ENCODE measurements at regions of chr11 and their contacts with region 1.

Region 1: GRCh38 chr11:110429731-110430266 is at the start of gene FDX1:
- DNase-seq: peak; percentile 65 to 73
- H3K4me3 ChIP-seq: peak within 1 kb of the TSS; percentile 89
- H3K27ac ChIP-seq: peak within 1 kb of the TSS; percentile 52
- H3K4me1 ChIP-seq: peaks cover 34% of the 10 kb centered on the region
- H3K27me3 ChIP-seq: no peaks in the 10 kb centered on the region
- CTCF ChIP-seq: no peak
- total RNA-seq, gene FDX1: 10.5 and 11.9 TPM in 2 replicates

Region 2: DNA sequence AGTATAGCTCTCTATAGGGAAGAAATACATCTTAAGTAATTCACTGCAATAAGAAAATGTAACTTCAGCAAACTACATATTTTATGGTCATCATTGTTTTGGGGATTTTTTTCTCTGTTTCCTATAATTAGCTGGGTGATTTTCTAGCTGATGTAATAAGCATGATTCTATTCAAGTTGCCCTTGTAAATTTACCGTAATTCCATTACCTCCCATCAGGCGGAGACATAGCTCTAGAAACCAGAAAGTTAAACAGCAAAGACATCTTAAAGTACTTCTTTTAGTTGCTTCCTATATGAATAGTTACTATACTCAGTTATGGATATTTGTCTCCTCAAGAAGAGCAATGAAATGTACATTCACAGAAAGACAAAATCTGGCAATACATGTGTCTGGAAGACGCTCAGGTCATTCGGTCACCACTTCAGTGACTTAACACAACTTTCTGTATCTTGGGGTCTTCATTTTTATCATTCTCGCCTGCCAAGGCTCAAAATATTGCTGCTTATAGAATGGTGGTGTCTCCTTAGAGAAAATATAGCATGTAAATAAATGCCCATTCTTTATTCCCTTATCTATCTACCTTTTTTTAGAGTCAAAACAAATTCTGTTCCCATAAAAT is 576.5 kb before region 1 on chr11:
- CTCF ChIA-PET with region 1: no interaction called
- POLR2A ChIA-PET with region 1: no interaction called
- intact Hi-C with region 1: loop called (anchors 1 kb)
- DNase-seq: peak; percentile 21 to 66
- H3K4me3 ChIP-seq: no peak overlapping the region
- H3K27ac ChIP-seq: no peak overlapping the region
- H3K4me1 ChIP-seq: no peaks in the 10 kb centered on the region
- H3K27me3 ChIP-seq: no peaks in the 10 kb centered on the region
- CTCF ChIP-seq: peak; percentile 88

Region 3: DNA sequence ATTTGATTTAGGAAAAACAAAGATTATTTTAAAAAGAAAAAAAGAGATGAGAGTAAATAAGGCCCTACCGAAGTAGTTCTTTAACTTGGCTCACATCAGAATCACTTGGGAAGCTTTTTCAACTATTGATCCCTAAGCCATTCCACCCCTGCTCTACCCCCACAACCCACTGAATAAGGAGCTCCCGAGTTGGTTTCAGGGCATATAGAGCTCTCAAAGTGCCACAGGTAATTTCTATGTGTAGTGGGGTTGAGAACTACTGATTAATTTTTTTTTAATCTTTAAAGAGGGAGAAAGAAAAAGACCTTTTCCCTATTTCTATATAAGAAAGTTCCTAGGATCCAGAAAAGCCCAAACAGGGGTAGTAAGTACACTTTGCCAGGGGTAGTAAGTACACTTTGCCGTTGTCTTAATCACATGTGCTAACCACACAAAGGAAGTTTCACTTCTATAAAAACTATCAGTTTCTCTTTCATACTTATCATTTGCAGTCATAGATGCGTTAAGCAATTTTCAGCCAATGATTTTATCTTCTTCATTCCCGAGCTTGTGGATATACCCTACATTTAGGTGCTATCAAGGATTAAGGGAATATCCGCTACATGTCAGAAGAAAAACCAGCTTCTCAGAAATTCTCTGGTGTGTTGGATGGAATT is 445.0 kb before region 1 on chr11:
- CTCF ChIA-PET with region 1: no interaction called
- POLR2A ChIA-PET with region 1: interaction called, 10 read pairs
- intact Hi-C with region 1: no loop called
- DNase-seq: no peak
- H3K4me3 ChIP-seq: no peak overlapping the region
- H3K27ac ChIP-seq: no peak overlapping the region
- H3K4me1 ChIP-seq: no peaks in the 10 kb centered on the region
- H3K27me3 ChIP-seq: no peaks in the 10 kb centered on the region
- CTCF ChIP-seq: no peak

Region 4: DNA sequence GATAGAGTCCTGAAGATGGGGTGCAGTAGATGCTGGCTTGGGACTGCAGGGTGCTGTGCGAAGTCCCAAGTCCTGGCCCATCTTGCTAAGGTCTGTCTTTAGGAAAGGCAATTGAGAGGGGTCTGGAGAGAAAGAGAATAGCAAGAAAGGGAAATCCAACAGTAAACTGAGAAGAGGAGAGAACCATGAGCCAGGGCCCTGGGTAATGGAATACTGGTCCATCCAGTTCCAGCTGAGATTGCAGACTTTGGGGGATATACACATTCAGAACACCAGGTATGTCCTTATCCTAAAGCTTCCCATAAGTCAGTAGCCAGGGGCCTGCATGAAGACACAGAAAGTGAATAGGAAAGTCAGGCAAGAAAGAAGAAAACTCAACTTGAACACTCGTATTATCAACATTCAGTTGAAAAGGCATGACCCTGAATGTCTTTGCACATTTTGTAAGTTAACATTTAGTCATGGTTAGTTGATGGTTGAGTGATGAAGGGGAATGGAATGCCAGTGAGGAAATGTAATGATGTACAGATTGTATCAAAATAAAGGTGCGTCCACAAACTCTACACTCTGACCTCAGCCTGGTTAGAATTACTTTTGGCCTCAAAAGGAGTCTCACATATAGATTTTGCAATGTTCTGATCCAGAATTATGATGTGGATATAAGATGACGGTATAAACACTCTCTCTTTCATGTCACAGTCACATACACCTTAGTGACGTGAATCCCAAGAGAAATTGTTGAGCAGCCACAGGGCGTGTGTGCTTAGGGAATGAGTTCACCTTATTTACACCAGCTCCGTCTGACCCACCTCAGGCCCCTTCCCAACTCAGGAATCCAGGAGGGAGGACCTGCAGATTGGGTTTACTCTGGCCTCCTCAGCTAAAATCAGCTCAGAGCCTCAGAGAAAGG is 233.7 kb before region 1 on chr11:
- CTCF ChIA-PET with region 1: interaction called, 16 read pairs
- POLR2A ChIA-PET with region 1: no interaction called
- intact Hi-C with region 1: loop called (anchors 1 kb)
- DNase-seq: peak; percentile 57 to 99
- H3K4me3 ChIP-seq: no peak overlapping the region; the same call in 1 of the 2 replicates
- H3K27ac ChIP-seq: peak overlapping the region; percentile 91
- H3K4me1 ChIP-seq: peaks cover 82% of the 10 kb centered on the region
- H3K27me3 ChIP-seq: no peaks in the 10 kb centered on the region
- CTCF ChIP-seq: no peak

Region 5: GRCh38 chr11:110289472-110289871 is 140.3 kb before region 1 on chr11:
- CTCF ChIA-PET with region 1: interaction called, 11 read pairs
- POLR2A ChIA-PET with region 1: no interaction called
- intact Hi-C with region 1: no loop called
- DNase-seq: no peak
- H3K4me3 ChIP-seq: no peak overlapping the region
- H3K27ac ChIP-seq: no peak overlapping the region
- H3K4me1 ChIP-seq: peaks cover 45% of the 10 kb centered on the region
- H3K27me3 ChIP-seq: no peaks in the 10 kb centered on the region
- CTCF ChIP-seq: no peak

Region 6: GRCh38 chr11:110490886-110491285 is 61.1 kb after region 1 on chr11:
- CTCF ChIA-PET with region 1: no interaction called
- POLR2A ChIA-PET with region 1: no interaction called
- intact Hi-C with region 1: no loop called
- DNase-seq: no peak
- H3K4me3 ChIP-seq: no peak overlapping the region
- H3K27ac ChIP-seq: no peak overlapping the region
- H3K4me1 ChIP-seq: no peaks in the 10 kb centered on the region
- H3K27me3 ChIP-seq: no peaks in the 10 kb centered on the region
- CTCF ChIP-seq: no peak

Region 7: DNA sequence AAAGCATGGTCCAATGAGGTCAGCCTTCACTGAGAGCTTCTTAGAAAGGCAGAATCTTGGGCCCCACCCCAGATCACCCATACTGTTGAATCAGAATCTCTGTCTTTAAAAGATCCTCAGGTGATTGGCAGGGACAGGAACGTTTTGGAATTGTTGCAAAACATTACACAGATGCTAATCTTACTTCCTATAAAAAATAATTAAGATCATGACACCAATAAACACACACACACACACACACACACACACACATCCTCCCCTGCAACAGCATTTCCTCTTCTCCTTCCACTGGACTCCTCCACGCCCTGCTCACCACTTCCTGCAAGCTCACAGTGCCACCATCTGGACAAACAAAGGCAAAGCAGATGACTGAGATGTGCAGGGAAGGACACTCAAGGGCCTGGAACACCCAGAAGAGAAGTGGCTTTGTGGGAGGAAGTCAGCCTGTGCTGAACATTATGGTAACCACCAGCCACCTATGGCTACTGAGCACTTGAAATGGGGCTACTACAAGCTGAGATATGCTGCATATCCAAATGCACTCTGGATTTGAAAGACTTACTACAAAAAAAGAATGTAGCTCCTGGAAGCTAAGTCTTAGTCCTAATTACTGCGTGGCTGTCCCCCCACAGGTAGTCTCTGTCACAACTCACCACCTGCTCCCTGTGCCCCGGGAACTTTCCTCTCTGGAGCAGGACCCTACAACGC is 1016.8 kb after region 1 on chr11:
- CTCF ChIA-PET with region 1: no interaction called
- POLR2A ChIA-PET with region 1: no interaction called
- intact Hi-C with region 1: loop called (anchors 5 kb)
- DNase-seq: peak; percentile 63 to 81
- H3K4me3 ChIP-seq: no peak overlapping the region
- H3K27ac ChIP-seq: no peak overlapping the region
- H3K4me1 ChIP-seq: no peaks in the 10 kb centered on the region
- H3K27me3 ChIP-seq: no peaks in the 10 kb centered on the region
- CTCF ChIP-seq: peak; percentile 91